CD4-positive, alpha-beta T cell (primary cell): ENCODE measurements at regions of chr12 and their contacts with region 1.

Region 1: GRCh38 chr12:67482751-67483671 is 165.5 kb upstream of the DYRK2 start:
- DNase-seq: peak; percentile 58 to 95 (median 84)
- ATAC-seq: peak; percentile 92
- H3K4me3 ChIP-seq: no peak overlapping the region
- H3K4me3 Mint-ChIP-seq: peak overlapping the region; percentile 23
- H3K27ac ChIP-seq: peak overlapping the region; percentile 3 to 66
- H3K27ac Mint-ChIP-seq: peak overlapping the region; percentile 84
- H3K4me1 ChIP-seq: peaks cover 47% of the 10 kb centered on the region
- H3K4me1 Mint-ChIP-seq: peaks cover 52% of the 10 kb centered on the region
- H3K27me3 ChIP-seq: no peaks in the 10 kb centered on the region
- H3K27me3 Mint-ChIP-seq: no peaks in the 10 kb centered on the region
- CTCF ChIP-seq: no peak

Region 2: DNA sequence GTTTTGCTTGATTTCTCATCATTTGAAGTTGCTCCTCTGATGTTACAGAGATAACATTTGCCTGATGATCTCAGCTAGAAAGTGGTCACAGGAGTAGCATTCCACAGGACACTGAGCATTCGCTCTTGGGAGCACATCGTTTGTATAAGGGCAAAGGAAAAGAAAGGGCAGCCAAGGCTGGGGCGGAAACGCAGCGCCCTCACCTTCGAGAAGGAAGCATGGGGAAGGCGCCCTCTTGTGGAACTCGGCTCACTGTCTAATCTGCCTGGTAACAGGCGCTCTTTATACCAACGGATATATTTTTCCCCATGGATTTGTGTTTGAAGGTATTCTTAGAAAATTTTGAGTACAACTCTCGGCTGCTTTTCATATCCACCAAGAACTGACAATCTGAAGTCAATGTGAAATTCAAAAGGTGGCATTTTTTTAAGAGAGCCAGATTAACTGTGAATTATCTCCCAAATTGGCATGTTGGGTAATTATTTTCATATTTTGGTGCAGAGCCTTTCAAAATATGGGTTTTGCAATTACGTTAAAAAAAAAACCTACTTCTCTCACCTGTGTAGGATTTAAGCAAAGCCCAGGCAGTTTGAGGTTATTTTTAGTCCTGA is 41.2 kb before region 1 on chr12:
- CTCF ChIA-PET with region 1: no interaction called
- POLR2A ChIA-PET with region 1: no interaction called
- intact Hi-C with region 1: loop called (anchors 2 to 5 kb)
- DNase-seq: peak; percentile 64 to 87 (median 74)
- ATAC-seq: peak; percentile 96
- H3K4me3 ChIP-seq: no peak overlapping the region
- H3K4me3 Mint-ChIP-seq: peak overlapping the region; percentile 77
- H3K27ac ChIP-seq: no peak overlapping the region
- H3K27ac Mint-ChIP-seq: peak overlapping the region; percentile 10
- H3K4me1 ChIP-seq: peaks cover 14% of the 10 kb centered on the region
- H3K4me1 Mint-ChIP-seq: peaks cover 32% of the 10 kb centered on the region
- H3K27me3 ChIP-seq: no peaks in the 10 kb centered on the region
- H3K27me3 Mint-ChIP-seq: no peaks in the 10 kb centered on the region
- CTCF ChIP-seq: peak; percentile 84

Region 3: DNA sequence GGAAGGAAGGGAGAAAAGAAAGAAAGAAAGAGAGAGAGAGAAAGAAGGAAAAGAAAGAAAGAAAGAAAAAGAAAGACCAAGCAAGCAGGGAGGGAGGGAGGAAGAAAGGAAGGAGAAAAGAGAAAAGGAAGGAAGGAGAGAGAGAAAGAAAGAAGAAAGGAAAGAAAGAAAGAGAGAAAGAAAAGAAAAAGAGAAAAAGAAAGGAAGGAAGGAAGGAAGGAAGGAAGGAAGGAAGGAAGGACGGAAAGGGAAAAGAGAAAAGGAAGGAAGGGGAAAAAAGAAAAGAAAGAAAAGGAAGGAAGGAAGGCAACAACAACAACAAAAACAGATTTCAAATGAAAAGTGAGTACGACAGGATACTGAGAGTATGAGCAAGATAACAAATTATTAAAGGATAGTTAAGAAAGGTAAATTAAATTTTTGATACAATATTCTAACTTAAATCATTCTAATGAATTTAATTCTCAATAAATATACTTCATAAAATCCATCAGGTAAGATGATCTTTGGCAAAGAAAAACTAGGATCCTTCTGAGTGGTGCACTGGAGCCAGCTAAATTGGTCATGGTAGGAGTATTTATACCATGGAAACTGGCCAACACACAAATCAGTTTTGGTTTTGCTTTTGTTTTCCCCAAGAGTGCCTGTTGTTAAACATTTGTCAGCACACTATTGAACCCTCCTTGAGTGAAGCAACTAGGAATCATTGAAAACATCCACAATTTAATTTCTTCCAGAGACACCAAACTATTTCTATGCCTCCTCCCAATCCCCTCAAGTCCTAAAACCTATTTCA is 109.4 kb after region 1 on chr12:
- CTCF ChIA-PET with region 1: no interaction called
- POLR2A ChIA-PET with region 1: interaction called, 7 read pairs
- intact Hi-C with region 1: loop called in 1 of 2 experiments (anchors 10 kb)
- DNase-seq: peak in 4 of 14 experiments; percentile 15 to 85 (median 48)
- ATAC-seq: no peak
- H3K4me3 ChIP-seq: no peak overlapping the region
- H3K4me3 Mint-ChIP-seq: peak overlapping the region; percentile 32
- H3K27ac ChIP-seq: peak overlapping the region in 1 of 2 donors; percentile 35
- H3K27ac Mint-ChIP-seq: peak overlapping the region; percentile 60
- H3K4me1 ChIP-seq: peaks cover 40% of the 10 kb centered on the region
- H3K4me1 Mint-ChIP-seq: peaks cover 68% of the 10 kb centered on the region
- H3K27me3 ChIP-seq: no peaks in the 10 kb centered on the region
- H3K27me3 Mint-ChIP-seq: no peaks in the 10 kb centered on the region
- CTCF ChIP-seq: no peak